ENCODE measurements at regions of chr5 and their contacts with region 1.

Region 1: DNA sequence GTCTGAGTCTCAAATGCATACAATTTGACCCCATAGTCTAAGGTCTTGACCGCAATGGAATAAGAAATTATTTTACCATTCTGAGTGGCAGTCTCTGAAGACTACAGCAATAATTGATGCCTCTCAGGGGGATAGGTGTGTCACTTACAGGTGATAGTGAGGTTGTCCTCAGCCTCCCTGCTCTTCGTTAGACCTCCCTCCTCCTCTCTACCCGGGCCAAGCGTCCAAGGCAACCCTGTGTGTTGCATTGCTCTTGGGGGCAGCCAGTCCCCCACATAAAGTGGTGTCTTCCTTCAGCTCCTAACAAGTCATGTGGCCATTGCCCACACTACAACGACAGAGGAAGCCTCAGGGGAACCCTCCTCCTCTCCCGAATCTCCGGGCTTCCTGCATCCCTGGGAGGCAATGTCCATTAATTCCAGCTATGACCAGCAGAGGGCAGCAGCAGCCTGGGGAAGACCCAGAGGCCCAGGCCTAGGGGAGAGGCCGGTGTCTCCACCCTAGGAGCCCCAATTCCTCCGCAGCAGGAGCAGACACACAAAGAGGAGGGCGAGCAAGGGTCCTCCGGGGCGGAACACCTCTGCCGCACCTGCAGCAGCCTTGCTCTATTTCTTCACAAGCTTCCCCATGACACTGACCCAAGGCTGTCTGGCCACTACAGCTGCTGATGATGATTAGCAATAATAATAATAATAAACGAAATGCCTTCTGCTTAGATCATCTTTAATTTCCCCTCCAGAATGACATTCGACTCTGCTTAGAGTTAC is 134.8 kb downstream of the KCNIP1 start:
- DNase-seq: peak; percentile 15 to 70 (median 49)
- ATAC-seq: no peak
- H3K4me3 ChIP-seq: no peak overlapping the region
- H3K4me3 Mint-ChIP-seq: no peak overlapping the region
- H3K27ac ChIP-seq: no peak overlapping the region
- H3K27ac Mint-ChIP-seq: no peak overlapping the region
- H3K4me1 ChIP-seq: peaks cover 11% of the 10 kb centered on the region
- H3K4me1 Mint-ChIP-seq: peaks cover 10% of the 10 kb centered on the region
- H3K27me3 ChIP-seq: no peaks in the 10 kb centered on the region
- H3K27me3 Mint-ChIP-seq: peaks cover 25% of the 10 kb centered on the region
- CTCF ChIP-seq: peak; percentile 65

Region 2: DNA sequence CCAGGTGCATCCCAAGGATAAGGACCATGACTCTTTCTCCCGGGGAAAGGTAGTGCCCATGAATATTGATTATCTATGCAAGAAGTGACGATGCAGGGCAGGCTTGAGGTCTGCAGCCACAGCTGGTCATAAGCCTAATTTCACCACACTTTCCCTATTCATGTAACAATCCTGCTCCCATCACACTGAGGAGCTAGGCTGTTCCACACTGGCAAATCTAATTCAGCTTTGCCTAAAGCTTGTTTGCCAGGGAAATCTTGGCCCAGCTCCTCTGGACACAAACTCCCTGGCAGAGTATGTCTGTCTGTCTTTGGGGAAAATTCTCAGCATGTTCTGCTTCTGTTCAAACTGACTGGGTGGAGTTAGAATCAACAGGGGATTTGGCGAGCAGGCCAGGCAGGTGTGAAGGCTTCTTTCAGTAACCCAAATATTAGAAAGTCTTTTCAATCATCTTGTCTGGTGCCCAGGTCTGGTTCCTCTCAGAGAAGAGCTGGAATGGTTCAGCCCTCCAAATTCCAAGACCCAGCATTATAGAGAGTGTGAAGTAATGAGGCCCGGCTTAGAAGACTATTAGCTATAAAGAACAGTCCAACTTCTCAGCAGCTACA is 1143.6 kb before region 1 on chr5:
- CTCF ChIA-PET with region 1: no interaction called
- POLR2A ChIA-PET with region 1: no interaction called
- intact Hi-C with region 1: no loop called
- DNase-seq: no peak
- ATAC-seq: no peak
- H3K4me3 ChIP-seq: no peak overlapping the region
- H3K4me3 Mint-ChIP-seq: no peak overlapping the region
- H3K27ac ChIP-seq: no peak overlapping the region
- H3K27ac Mint-ChIP-seq: no peak overlapping the region
- H3K4me1 ChIP-seq: no peaks in the 10 kb centered on the region
- H3K4me1 Mint-ChIP-seq: no peaks in the 10 kb centered on the region
- H3K27me3 ChIP-seq: no peaks in the 10 kb centered on the region
- H3K27me3 Mint-ChIP-seq: peaks cover 18% of the 10 kb centered on the region
- CTCF ChIP-seq: no peak

Region 3: GRCh38 chr5:170522211-170523133 is 116.2 kb before region 1 on chr5:
- CTCF ChIA-PET with region 1: no interaction called
- POLR2A ChIA-PET with region 1: no interaction called
- intact Hi-C with region 1: no loop called
- DNase-seq: no peak
- ATAC-seq: no peak
- H3K4me3 ChIP-seq: no peak overlapping the region
- H3K4me3 Mint-ChIP-seq: no peak overlapping the region
- H3K27ac ChIP-seq: no peak overlapping the region
- H3K27ac Mint-ChIP-seq: no peak overlapping the region
- H3K4me1 ChIP-seq: no peaks in the 10 kb centered on the region
- H3K4me1 Mint-ChIP-seq: no peaks in the 10 kb centered on the region
- H3K27me3 ChIP-seq: no peaks in the 10 kb centered on the region
- H3K27me3 Mint-ChIP-seq: no peaks in the 10 kb centered on the region
- CTCF ChIP-seq: no peak

Region 4: GRCh38 chr5:170625221-170626165 is 13.1 kb before region 1 on chr5:
- CTCF ChIA-PET with region 1: interaction called, 12 read pairs
- POLR2A ChIA-PET with region 1: no interaction called
- intact Hi-C with region 1: no loop called
- DNase-seq: no peak
- ATAC-seq: no peak
- H3K4me3 ChIP-seq: no peak overlapping the region
- H3K4me3 Mint-ChIP-seq: no peak overlapping the region
- H3K27ac ChIP-seq: no peak overlapping the region
- H3K27ac Mint-ChIP-seq: no peak overlapping the region
- H3K4me1 ChIP-seq: no peaks in the 10 kb centered on the region
- H3K4me1 Mint-ChIP-seq: no peaks in the 10 kb centered on the region
- H3K27me3 ChIP-seq: no peaks in the 10 kb centered on the region
- H3K27me3 Mint-ChIP-seq: peaks cover 6% of the 10 kb centered on the region
- CTCF ChIP-seq: no peak

Region 5: GRCh38 chr5:171342362-171343111 is 703.9 kb after region 1 on chr5:
- CTCF ChIA-PET with region 1: no interaction called
- POLR2A ChIA-PET with region 1: no interaction called
- intact Hi-C with region 1: loop called in 1 of 2 experiments (anchors 5 kb)
- DNase-seq: peak in 6 of 9 experiments; percentile 7 to 66 (median 31)
- ATAC-seq: no peak
- H3K4me3 ChIP-seq: no peak overlapping the region
- H3K4me3 Mint-ChIP-seq: no peak overlapping the region
- H3K27ac ChIP-seq: no peak overlapping the region
- H3K27ac Mint-ChIP-seq: no peak overlapping the region
- H3K4me1 ChIP-seq: no peaks in the 10 kb centered on the region
- H3K4me1 Mint-ChIP-seq: no peaks in the 10 kb centered on the region
- H3K27me3 ChIP-seq: peaks cover 0 to 2% of the 10 kb centered on the region in 2 experiments
- H3K27me3 Mint-ChIP-seq: peaks cover 21% of the 10 kb centered on the region
- CTCF ChIP-seq: peak; percentile 43